ENCODE measurements at regions of chr19 and their contacts with region 1.

Region 1: DNA sequence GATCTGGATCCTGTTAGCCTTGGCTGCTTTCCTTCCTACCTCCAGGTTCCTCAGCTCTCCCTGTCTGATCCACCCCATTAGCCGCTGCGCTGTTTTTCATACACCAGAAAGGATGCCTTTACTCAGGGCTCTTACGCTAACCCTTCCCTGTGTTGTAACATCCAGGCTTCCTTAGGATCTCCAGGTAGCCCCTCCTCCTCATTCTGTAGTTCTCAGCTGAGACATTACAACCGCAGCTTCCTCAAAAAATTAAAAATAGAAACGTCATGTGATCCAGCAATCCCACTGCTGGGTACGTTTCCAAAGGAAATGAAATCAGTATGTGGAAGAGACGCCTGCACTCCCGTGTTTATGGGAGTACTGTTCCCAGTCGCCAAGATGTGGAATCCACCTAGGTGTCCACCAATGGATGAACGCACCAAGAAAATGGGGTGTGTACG is 18.4 kb upstream of the MYADM start:
- DNase-seq: no peak
- ATAC-seq: no peak
- H3K4me3 Mint-ChIP-seq: no peak overlapping the region
- H3K27ac Mint-ChIP-seq: no peak overlapping the region
- H3K4me1 Mint-ChIP-seq: peaks cover 4% of the 10 kb centered on the region
- H3K27me3 Mint-ChIP-seq: peaks cover 25% of the 10 kb centered on the region
- CTCF ChIP-seq: no peak

Region 2: GRCh38 chr19:53906211-53907192 is 57.2 kb after region 1 on chr19:
- CTCF ChIA-PET with region 1: interaction called, 5 read pairs
- POLR2A ChIA-PET with region 1: interaction called, 3 read pairs
- intact Hi-C with region 1: loop called (anchors 10 kb)
- DNase-seq: peak; percentile 73
- ATAC-seq: peak; percentile 72
- H3K4me3 Mint-ChIP-seq: no peak overlapping the region
- H3K27ac Mint-ChIP-seq: no peak overlapping the region
- H3K4me1 Mint-ChIP-seq: peaks cover 14% of the 10 kb centered on the region
- H3K27me3 Mint-ChIP-seq: peaks cover 65% of the 10 kb centered on the region
- CTCF ChIP-seq: peak; percentile 86

Measured in activated CD8-positive, alpha-beta T cell treated with anti-CD3 and anti-CD28 coated beads for 36 hours (primary cell).